ENCODE measurements at regions of chr1 and their contacts with region 1.

Region 1: DNA sequence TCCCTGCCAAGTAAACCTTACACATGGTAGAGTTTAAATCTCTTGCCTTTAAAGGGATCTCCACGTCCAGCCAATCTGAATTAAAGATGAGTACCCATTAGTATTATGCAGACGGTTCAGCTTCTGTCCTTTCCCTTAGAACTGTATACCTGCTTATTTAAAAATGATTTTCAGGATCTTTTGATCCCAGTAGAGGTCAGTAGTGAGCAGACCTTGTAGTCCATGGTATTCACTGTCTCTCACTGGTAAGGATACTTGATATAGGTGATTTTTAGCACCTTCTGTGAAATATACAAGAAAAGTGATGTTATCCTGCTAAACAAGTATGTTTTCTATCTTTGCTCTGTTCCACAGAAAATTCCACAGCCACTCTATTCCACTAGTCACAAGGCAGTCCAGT is 1211.6 kb upstream of the ADGRL4 start:
- DNase-seq: peak; percentile 60
- H3K4me3 ChIP-seq: no peak overlapping the region
- H3K27ac ChIP-seq: peak overlapping the region; percentile 16
- H3K4me1 ChIP-seq: peaks cover 7% of the 10 kb centered on the region
- H3K27me3 ChIP-seq: no peaks in the 10 kb centered on the region
- CTCF ChIP-seq: peak; percentile 66 to 71

Region 2: DNA sequence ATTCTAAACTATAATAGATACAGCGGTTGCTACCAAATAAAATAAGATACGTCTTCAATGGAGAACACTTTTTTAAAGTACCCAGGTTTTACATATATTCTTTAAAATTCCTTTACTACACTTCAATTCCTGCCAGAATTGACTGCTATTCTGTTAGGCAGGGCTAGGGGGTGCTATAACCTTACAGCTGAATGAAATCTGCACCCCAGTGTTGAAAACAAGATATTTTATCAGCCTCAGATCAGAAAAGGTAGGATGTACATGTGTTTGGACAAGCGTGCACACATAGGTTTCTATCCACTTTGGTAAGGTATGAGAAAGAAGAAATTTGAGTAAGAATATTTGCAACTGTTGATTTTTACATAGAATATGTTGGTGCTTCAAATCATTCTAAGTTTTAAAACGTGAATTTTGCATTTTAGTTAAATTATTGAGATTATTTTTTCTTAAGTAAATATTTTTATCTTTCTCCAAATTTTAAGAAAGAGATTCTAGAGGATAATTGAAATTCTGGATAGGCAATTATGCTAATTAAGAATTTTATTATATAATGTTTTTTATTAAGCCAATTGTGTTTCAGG is 720.8 kb before region 1 on chr1:
- CTCF ChIA-PET with region 1: no interaction called
- dilution Hi-C with region 1: no loop called
- in situ Hi-C with region 1: no loop called
- intact Hi-C with region 1: loop called (anchors 2 kb)
- DNase-seq: peak; percentile 6
- H3K4me3 ChIP-seq: no peak overlapping the region
- H3K27ac ChIP-seq: no peak overlapping the region
- H3K4me1 ChIP-seq: no peaks in the 10 kb centered on the region
- H3K27me3 ChIP-seq: peaks cover 4% of the 10 kb centered on the region
- CTCF ChIP-seq: peak; percentile 96

Region 3: DNA sequence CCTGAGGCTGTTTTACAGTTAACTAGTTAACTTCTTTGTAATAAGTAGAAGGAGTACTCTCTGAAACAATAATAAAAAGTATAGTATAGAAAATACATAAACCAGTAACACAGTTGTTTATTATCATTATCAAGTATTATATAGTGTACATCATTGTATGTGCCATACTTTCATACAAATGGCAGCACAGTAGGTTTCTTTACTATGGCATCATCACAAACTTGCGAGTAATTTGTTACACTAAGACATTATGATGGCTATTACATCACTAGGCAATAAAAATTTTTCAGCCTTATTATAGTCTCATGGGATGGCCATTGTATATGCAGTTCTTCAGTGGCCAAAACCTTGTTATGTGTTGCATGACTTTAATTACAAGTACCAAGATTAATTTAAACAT is 206.1 kb after region 1 on chr1:
- CTCF ChIA-PET with region 1: no interaction called
- dilution Hi-C with region 1: no loop called
- in situ Hi-C with region 1: no loop called
- intact Hi-C with region 1: loop called (anchors 1 kb)
- DNase-seq: no peak
- H3K4me3 ChIP-seq: no peak overlapping the region
- H3K27ac ChIP-seq: no peak overlapping the region
- H3K4me1 ChIP-seq: no peaks in the 10 kb centered on the region
- H3K27me3 ChIP-seq: no peaks in the 10 kb centered on the region
- CTCF ChIP-seq: no peak

Region 4: DNA sequence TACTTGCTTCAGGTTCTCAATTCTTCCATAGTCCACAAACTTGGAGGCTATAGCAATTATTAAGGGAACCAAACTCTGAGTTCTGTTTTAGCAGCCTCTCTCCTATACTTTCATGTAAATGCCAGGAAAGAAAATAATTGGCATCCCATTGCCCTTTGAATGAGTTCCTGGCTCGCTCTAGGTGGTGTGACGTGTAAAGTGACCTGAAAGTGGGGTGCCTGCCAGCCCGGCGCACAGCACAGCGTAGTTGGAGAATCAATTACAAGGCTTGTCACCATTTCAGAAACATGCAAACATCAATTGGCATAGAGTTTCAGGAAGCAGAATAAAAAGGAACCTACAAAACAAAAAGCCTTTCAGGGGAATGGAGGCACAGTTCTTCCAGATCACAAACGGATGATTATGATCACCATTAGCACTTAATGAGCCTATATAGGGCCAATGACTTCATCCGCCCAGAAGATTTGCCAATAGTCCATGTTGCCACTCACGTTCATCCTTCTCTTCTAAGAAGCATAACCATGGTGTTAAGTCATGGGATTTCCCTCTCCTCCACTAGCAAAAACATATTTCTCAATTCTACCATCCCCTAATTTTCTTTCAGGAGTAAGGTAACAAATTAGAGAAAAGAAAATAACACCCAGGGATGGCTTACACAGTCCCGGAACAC is 1228.0 kb after region 1 on chr1:
- CTCF ChIA-PET with region 1: no interaction called
- dilution Hi-C with region 1: no loop called
- in situ Hi-C with region 1: no loop called
- intact Hi-C with region 1: loop called (anchors 10 kb)
- DNase-seq: no peak
- H3K4me3 ChIP-seq: no peak overlapping the region
- H3K27ac ChIP-seq: no peak overlapping the region
- H3K4me1 ChIP-seq: no peaks in the 10 kb centered on the region
- H3K27me3 ChIP-seq: no peaks in the 10 kb centered on the region
- CTCF ChIP-seq: no peak

Region 5: GRCh38 chr1:81542196-81542595 is 1324.1 kb after region 1 on chr1:
- CTCF ChIA-PET with region 1: no interaction called
- dilution Hi-C with region 1: no loop called
- in situ Hi-C with region 1: no loop called
- intact Hi-C with region 1: loop called (anchors 5 kb)
- DNase-seq: no peak
- H3K4me3 ChIP-seq: no peak overlapping the region
- H3K27ac ChIP-seq: no peak overlapping the region
- H3K4me1 ChIP-seq: no peaks in the 10 kb centered on the region
- H3K27me3 ChIP-seq: no peaks in the 10 kb centered on the region
- CTCF ChIP-seq: no peak

Region 6: GRCh38 chr1:81731989-81732388 is 1513.9 kb after region 1 on chr1:
- CTCF ChIA-PET with region 1: no interaction called
- dilution Hi-C with region 1: no loop called
- in situ Hi-C with region 1: no loop called
- intact Hi-C with region 1: loop called (anchors 10 kb)
- DNase-seq: peak; percentile 52
- H3K4me3 ChIP-seq: no peak overlapping the region
- H3K27ac ChIP-seq: no peak overlapping the region
- H3K4me1 ChIP-seq: peaks cover 14% of the 10 kb centered on the region
- H3K27me3 ChIP-seq: no peaks in the 10 kb centered on the region
- CTCF ChIP-seq: peak; percentile 42 to 63

Region 7: GRCh38 chr1:81760477-81761097 is 1542.5 kb after region 1 on chr1:
- CTCF ChIA-PET with region 1: no interaction called
- dilution Hi-C with region 1: no loop called
- in situ Hi-C with region 1: loop called in 1 of 2 experiments (anchors 25 kb)
- intact Hi-C with region 1: loop called (anchors 5 kb)
- DNase-seq: no peak
- H3K4me3 ChIP-seq: no peak overlapping the region
- H3K27ac ChIP-seq: no peak overlapping the region
- H3K4me1 ChIP-seq: no peaks in the 10 kb centered on the region
- H3K27me3 ChIP-seq: no peaks in the 10 kb centered on the region
- CTCF ChIP-seq: peak; percentile 23 to 50

Measured in mammary epithelial cell (primary cell).